ENCODE measurements at regions of chr4 and their contacts with region 1.

Region 1: DNA sequence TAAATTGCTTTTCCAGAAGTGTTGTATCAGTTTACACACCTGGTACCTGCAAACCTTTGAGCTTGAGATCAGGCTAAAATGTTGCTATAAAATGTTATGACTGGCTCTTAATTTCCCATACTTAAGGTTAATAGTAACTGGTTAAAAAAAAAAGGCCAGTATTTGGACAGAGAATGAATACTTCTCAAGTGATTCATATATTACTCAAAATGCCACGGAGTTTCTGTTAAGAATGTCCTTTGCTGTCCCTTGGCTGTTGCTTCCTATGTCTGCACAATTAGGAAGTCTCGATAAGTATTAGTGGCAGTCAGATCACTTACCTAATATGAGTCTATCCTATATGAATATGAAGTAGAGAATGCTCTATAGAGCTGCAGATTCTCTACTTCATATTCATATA is 232.2 kb upstream of the IGFBP7 start:
- DNase-seq: no peak
- H3K4me3 ChIP-seq: no peak overlapping the region
- H3K27ac ChIP-seq: no peak overlapping the region
- H3K4me1 ChIP-seq: no peaks in the 10 kb centered on the region
- H3K27me3 ChIP-seq: no peaks in the 10 kb centered on the region
- CTCF ChIP-seq: no peak
- POLR2A ChIP-seq: no peak

Region 2: GRCh38 chr4:57023104-57023503 is 319.3 kb before region 1 on chr4:
- intact Hi-C with region 1: no loop called
- DNase-seq: no peak
- H3K4me3 ChIP-seq: no peak overlapping the region
- H3K27ac ChIP-seq: no peak overlapping the region
- H3K4me1 ChIP-seq: no peaks in the 10 kb centered on the region
- H3K27me3 ChIP-seq: no peaks in the 10 kb centered on the region
- CTCF ChIP-seq: no peak
- POLR2A ChIP-seq: no peak

Region 3: GRCh38 chr4:58658701-58659100 is 1316.3 kb after region 1 on chr4:
- intact Hi-C with region 1: loop called (anchors 5 kb)
- DNase-seq: no peak
- H3K4me3 ChIP-seq: no peak overlapping the region
- H3K27ac ChIP-seq: no peak overlapping the region
- H3K4me1 ChIP-seq: no peaks in the 10 kb centered on the region
- H3K27me3 ChIP-seq: no peaks in the 10 kb centered on the region
- CTCF ChIP-seq: no peak
- POLR2A ChIP-seq: no peak